MCF 10A (cell line): ENCODE measurements at regions of chr19 and their contacts with region 1.

Region 1: DNA sequence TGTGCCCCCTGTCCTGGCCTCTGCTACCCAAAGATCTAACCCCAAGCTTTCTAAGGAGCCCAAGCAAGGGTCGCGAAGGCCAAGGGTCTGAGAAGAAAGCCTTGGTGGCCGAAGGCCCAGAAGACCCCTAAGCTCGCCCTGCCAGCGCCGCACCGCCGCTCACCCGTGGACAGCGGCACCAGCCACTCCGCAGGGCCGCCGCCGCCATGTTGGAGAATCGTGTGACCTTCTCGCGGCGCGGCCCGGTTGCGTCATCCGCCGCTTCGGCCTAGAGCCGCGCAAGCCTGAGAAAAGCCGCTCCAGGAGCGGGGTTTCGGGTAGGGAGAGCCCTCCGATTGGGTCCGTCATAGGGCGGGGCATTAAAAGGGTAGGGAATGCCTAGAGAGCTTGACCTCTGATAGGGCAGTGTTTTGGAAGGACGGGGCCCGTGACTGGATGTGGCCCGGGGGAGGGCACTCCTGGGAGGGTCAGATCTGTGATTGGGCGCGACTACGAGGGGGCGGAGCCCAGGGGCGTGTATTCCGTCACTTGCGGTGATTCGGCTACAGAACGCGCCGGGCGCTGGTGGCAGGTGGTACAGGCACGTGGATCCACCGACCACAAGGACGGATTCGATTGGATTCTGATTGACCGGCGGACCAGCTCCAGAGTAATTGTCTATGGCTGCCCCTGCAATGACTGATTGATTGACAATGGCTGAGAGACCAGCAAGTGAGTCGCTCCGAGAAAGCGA is at the start of gene TIMM44:
- DNase-seq: peak; percentile 100
- H3K4me3 Mint-ChIP-seq: peak within 1 kb of the TSS; percentile 94
- H3K27ac Mint-ChIP-seq: peak within 1 kb of the TSS; percentile 97
- H3K4me1 Mint-ChIP-seq: peaks cover 11% of the 10 kb centered on the region
- H3K27me3 Mint-ChIP-seq: no peaks in the 10 kb centered on the region
- CTCF ChIP-seq: no peak
- total RNA-seq, gene TIMM44: 91.3 and 142 TPM in 2 replicates

Region 2: GRCh38 chr19:7641288-7642276 is 302.0 kb before region 1 on chr19:
- CTCF ChIA-PET with region 1: no interaction called
- POLR2A ChIA-PET with region 1: no interaction called
- intact Hi-C with region 1: no loop called
- DNase-seq: no peak
- H3K4me3 Mint-ChIP-seq: no peak overlapping the region
- H3K27ac Mint-ChIP-seq: no peak overlapping the region
- H3K4me1 Mint-ChIP-seq: peaks cover 5% of the 10 kb centered on the region
- H3K27me3 Mint-ChIP-seq: no peaks in the 10 kb centered on the region
- CTCF ChIP-seq: no peak

Region 3: DNA sequence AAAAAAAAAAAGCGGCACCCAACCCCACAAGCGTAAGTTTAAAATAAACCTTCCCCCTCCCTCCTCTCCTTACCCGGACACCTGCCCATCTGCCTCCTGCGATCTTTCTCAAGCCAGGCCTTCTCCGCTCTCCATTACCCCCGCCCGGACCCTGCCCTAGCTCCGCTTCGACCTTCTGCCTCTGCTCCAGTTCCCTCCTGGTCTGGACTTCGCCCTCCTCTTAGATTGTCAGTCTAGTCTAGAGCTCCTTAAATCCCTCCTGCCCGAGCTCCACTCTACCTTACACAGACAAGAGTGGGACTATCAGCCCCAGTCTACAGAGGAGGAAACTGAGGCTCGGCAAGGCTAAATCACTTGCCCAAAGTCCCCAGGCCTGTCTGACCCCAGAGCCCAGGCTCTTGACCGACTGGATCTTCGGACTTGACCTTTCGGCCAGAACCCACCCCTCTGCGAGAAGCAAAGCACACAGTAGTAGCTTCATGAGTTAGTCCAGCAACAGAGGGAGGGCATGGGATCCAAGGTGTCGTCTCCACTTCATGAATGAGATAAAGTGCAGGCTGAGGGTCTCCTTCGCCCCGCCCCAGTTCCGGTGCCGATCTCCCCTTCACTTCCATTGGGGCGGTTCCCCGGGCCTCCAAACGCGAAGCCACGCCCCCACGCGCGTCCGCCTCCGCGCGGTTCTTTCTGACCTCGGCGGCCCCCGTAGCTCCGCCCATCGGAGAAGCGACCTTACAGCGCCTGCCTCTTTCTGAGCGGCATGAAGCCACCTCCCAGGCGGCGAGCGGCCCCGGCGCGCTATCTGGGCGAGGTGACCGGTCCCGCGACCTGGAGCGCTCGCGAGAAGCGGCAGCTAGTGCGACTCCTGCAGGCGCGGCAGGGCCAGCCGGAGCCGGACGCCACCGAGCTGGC is 23.7 kb before region 1 on chr19 and contains the start of gene SNAPC2:
- CTCF ChIA-PET with region 1: interaction called, 7 read pairs
- POLR2A ChIA-PET with region 1: interaction called, 35 read pairs
- intact Hi-C with region 1: no loop called
- DNase-seq: peak; percentile 94
- H3K4me3 Mint-ChIP-seq: peak within 1 kb of the TSS; percentile 88
- H3K27ac Mint-ChIP-seq: peak within 1 kb of the TSS; percentile 59
- H3K4me1 Mint-ChIP-seq: peaks cover 19% of the 10 kb centered on the region
- H3K27me3 Mint-ChIP-seq: no peaks in the 10 kb centered on the region
- CTCF ChIP-seq: no peak
- total RNA-seq, gene SNAPC2: 24.1 and 27.1 TPM in 2 replicates

Region 4: GRCh38 chr19:7970716-7971448 is 27.3 kb after region 1 on chr19:
- CTCF ChIA-PET with region 1: interaction called, 23 read pairs
- POLR2A ChIA-PET with region 1: interaction called, 4 read pairs
- intact Hi-C with region 1: no loop called
- DNase-seq: peak; percentile 72
- H3K4me3 Mint-ChIP-seq: no peak overlapping the region
- H3K27ac Mint-ChIP-seq: no peak overlapping the region
- H3K4me1 Mint-ChIP-seq: no peaks in the 10 kb centered on the region
- H3K27me3 Mint-ChIP-seq: no peaks in the 10 kb centered on the region
- CTCF ChIP-seq: peak; percentile 81

Region 5: DNA sequence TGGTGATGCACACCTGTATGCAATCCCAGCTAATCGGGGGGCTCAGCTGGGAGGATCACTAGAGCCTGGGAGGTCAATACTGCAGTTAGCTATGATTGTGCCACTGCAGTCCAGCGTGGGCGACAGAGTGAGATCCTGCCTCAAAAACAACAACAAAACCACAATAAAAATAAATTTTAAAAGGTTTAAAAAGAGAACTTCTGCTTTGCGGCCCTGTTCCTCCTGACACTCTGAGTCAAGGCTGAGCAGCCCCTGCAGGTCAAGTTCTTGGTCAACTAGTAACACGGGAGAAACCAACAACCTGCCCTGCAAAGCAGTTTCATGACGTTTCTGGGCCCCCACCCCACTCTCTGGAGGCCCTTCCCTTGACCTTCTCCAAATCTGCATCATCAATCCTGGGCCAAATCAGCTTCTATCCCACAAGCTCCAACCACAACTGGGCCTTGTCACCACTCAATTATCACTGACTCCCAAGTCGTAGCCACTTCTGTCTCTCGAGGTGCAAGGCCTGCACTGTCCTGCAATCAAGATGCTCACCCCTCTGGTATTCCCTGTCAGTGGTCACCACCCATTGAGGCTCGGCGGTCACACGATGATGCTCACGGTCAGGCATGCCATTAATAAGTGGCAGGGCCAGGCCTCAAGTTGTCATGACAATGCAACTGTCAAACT is 54.3 kb after region 1 on chr19:
- CTCF ChIA-PET with region 1: interaction called, 47 read pairs
- POLR2A ChIA-PET with region 1: interaction called, 82 read pairs
- intact Hi-C with region 1: loop called (anchors 1 kb)
- DNase-seq: no peak
- H3K4me3 Mint-ChIP-seq: no peak overlapping the region
- H3K27ac Mint-ChIP-seq: no peak overlapping the region
- H3K4me1 Mint-ChIP-seq: peaks cover 44% of the 10 kb centered on the region
- H3K27me3 Mint-ChIP-seq: no peaks in the 10 kb centered on the region
- CTCF ChIP-seq: no peak

Region 6: DNA sequence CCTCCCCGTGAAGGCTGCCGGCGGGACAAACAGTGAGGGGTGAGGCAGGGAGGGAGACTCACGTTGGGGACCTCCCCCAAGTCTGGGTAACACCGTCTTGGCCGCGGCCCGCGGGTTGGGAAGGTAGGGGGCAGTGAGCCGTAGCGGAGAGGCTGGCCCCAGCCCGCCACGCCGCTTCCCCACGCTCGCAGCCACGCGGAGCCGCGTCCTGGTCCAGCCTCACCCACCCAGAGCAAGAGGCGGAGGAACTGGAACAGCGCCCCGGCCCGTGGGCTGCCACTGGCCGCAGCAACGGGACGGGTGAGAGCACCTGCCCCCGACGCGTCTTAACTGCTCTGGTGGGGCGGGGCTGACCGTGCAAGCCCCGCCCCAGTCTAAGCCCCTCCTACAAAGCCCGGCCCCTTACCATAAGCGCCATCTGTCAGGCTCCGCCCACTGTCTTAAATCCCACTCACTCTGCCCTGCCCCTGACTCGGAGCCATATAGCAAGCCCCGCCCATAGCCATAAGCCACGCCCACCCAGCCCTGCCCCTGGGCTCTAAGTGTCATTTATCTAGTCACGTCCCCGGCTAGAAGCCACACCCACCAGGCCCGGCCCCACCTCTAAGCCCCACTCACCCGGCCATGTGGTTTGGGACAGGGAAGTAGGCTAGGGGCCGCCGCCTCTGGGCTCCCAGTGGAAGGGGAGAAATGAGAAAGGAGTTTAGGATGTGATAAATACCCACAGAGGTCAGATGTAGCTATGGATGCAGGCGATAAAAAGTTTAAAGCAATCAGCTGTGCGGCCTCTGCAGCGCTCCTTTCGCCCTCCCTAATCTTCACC is 106.9 kb after region 1 on chr19:
- CTCF ChIA-PET with region 1: no interaction called
- POLR2A ChIA-PET with region 1: no interaction called
- intact Hi-C with region 1: no loop called
- DNase-seq: peak; percentile 68
- H3K4me3 Mint-ChIP-seq: no peak overlapping the region
- H3K27ac Mint-ChIP-seq: no peak overlapping the region
- H3K4me1 Mint-ChIP-seq: no peaks in the 10 kb centered on the region
- H3K27me3 Mint-ChIP-seq: no peaks in the 10 kb centered on the region
- CTCF ChIP-seq: no peak

Region 7: GRCh38 chr19:8158411-8159074 is 214.9 kb after region 1 on chr19:
- CTCF ChIA-PET with region 1: interaction called, 8 read pairs
- POLR2A ChIA-PET with region 1: interaction called, 6 read pairs
- intact Hi-C with region 1: loop called (anchors 5 kb)
- DNase-seq: peak; percentile 88
- H3K4me3 Mint-ChIP-seq: no peak overlapping the region
- H3K27ac Mint-ChIP-seq: no peak overlapping the region
- H3K4me1 Mint-ChIP-seq: peaks cover 13% of the 10 kb centered on the region
- H3K27me3 Mint-ChIP-seq: peaks cover 18% of the 10 kb centered on the region
- CTCF ChIP-seq: peak; percentile 55